H1 (cell line): ENCODE measurements at regions of chr19 and their contacts with region 1.

Region 1: DNA sequence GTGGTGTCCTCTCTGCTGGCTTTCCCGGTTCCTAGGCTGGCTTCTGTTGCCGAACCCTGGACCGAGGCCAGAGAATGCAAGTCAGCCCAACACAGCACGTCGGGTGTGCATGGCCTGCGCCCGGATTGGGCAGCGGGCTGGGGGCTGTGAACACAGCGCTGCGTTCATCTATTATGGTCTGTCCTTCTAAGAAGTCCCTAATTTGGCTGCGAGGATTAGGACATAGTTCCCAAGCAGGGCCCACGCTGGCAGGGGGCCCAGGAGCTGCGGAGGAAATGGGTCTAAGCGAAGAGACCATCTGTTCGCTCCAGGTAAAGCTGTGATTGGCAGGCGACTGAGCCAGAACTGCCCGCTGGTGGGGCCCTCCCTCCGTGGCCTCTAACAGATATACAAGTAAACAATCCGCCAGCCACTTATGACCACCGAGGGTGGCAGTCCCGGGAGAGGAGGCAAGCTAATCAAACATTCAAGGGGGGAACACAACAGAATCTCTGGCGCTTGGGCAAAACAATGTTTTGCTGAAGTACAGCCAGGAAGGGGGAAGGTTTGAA is 6.0 kb downstream of the SYCE2 start:
- DNase-seq: peak in 1 of 2 experiments; percentile 70
- H3K4me3 ChIP-seq: peak overlapping the region in 2 of 4 experiments; percentile 32 to 33; a peak in 3 of 8 replicates
- H3K27ac ChIP-seq: peak overlapping the region; percentile 42; the same call in 1 of the 2 replicates
- H3K4me1 ChIP-seq: peaks cover 8 to 20% (median 14%) of the 10 kb centered on the region in 4 experiments
- H3K27me3 ChIP-seq: peaks cover 1 to 3% (median 2%) of the 10 kb centered on the region in 4 experiments
- CTCF ChIP-seq: no peak
- EP300 ChIP-seq: no peak
- POLR2A ChIP-seq: no peak; a peak in 1 of 3 replicates
- RAD21 ChIP-seq: no peak

Region 2: DNA sequence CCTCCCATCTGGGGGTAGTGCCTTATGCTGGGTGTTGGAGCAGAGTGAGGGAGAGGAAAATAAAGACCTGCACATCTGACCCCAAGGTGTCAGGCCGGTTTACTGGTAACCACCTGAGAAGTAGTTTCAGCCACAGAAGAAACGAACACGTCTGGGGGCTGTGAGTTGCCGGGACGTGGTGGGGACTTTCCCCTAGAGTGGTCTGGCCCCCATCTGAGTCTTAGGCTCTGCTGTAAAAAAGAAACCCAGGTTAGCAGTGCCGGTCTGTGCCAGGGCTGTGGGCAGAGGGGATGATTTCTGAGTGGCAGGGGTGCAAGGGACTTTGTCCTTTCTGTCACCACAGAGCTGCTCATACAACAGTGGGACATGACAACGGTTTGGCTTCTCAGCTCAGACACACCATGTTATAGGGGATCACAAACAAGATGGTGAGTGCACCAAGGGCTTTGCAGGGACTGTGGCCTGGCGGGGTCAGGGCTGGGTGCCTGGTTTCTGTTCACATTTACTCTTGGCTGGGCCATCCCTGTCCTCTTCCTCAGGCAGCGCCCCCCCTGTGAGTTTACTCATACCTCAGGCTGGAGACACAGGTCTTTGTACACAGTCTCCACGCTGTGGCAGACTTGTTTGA is 13.1 kb before region 1 on chr19:
- CTCF ChIA-PET with region 1: interaction called, 9 read pairs
- POLR2A ChIA-PET with region 1: interaction called, 180 read pairs
- DNase-seq: no peak
- H3K4me3 ChIP-seq: no peak overlapping the region
- H3K27ac ChIP-seq: no peak overlapping the region
- H3K4me1 ChIP-seq: no peaks in the 10 kb centered on the region
- H3K27me3 ChIP-seq: no peaks in the 10 kb centered on the region
- CTCF ChIP-seq: no peak
- EP300 ChIP-seq: no peak
- POLR2A ChIP-seq: no peak
- RAD21 ChIP-seq: no peak

Region 3: GRCh38 chr19:12930002-12930653 is 17.0 kb after region 1 on chr19:
- CTCF ChIA-PET with region 1: interaction called, 4 read pairs
- POLR2A ChIA-PET with region 1: interaction called, 180 read pairs
- DNase-seq: no peak
- H3K4me3 ChIP-seq: no peak overlapping the region
- H3K27ac ChIP-seq: no peak overlapping the region
- H3K4me1 ChIP-seq: peaks cover 0 to 5% (median under 1%) of the 10 kb centered on the region in 4 experiments; a peak in 2 of 7 replicates
- H3K27me3 ChIP-seq: no peaks in the 10 kb centered on the region
- CTCF ChIP-seq: no peak
- EP300 ChIP-seq: no peak
- POLR2A ChIP-seq: no peak
- RAD21 ChIP-seq: no peak